GM12878 (cell line): ENCODE measurements at regions of chr2 and their contacts with region 1.

Region 1: GRCh38 chr2:175136334-175137215 is 31.4 kb downstream of the ATF2 start:
- DNase-seq: no peak
- ATAC-seq: peak; percentile 89
- H3K4me3 ChIP-seq: peak overlapping the region; percentile 25
- H3K27ac ChIP-seq: peak overlapping the region; percentile 49; the same call in 1 of the 2 replicates
- H3K4me1 ChIP-seq: peaks cover 17% of the 10 kb centered on the region
- H3K27me3 ChIP-seq: no peaks in the 10 kb centered on the region
- CTCF ChIP-seq: no peak
- EP300 ChIP-seq: no peak
- POLR2A ChIP-seq: no peak
- RAD21 ChIP-seq: no peak

Region 2: GRCh38 chr2:175123254-175123653 is 13.3 kb before region 1 on chr2:
- CTCF ChIA-PET with region 1: interaction called, 5 read pairs
- POLR2A ChIA-PET with region 1: no interaction called
- RAD21 ChIA-PET with region 1: no interaction called
- SMC1A ChIA-PET with region 1: interaction called, 12 read pairs
- in situ Hi-C with region 1: no loop called
- intact Hi-C with region 1: no loop called
- DNase-seq: no peak
- ATAC-seq: no peak
- H3K4me3 ChIP-seq: no peak overlapping the region
- H3K27ac ChIP-seq: no peak overlapping the region
- H3K4me1 ChIP-seq: no peaks in the 10 kb centered on the region
- H3K27me3 ChIP-seq: no peaks in the 10 kb centered on the region
- CTCF ChIP-seq: no peak
- EP300 ChIP-seq: no peak
- POLR2A ChIP-seq: no peak
- RAD21 ChIP-seq: no peak

Region 3: DNA sequence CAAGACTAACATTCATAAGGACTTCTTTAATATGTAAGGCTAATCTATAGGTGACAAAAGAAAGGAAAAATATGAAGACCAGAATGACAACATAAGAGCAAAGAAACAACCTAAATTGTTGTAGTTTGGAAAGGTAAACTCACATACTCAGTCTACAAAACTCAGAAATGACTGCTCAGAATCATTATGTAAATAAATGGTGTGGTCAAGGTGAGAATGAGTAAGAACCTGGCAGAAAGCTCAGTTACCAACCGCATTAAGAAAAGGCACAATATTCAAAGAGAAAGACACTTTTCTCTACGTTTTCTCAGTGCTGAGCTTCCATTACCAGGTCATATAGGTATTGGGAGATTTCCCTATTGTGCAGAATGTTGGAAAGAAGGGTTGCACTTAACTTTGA is 15.7 kb after region 1 on chr2:
- CTCF ChIA-PET with region 1: interaction called, 20 read pairs
- POLR2A ChIA-PET with region 1: interaction called, 7 read pairs
- RAD21 ChIA-PET with region 1: interaction called, 3 read pairs
- SMC1A ChIA-PET with region 1: interaction called, 33 read pairs
- in situ Hi-C with region 1: no loop called
- intact Hi-C with region 1: no loop called
- DNase-seq: no peak
- ATAC-seq: peak; percentile 80
- H3K4me3 ChIP-seq: no peak overlapping the region
- H3K27ac ChIP-seq: no peak overlapping the region
- H3K4me1 ChIP-seq: peaks cover 18% of the 10 kb centered on the region
- H3K27me3 ChIP-seq: no peaks in the 10 kb centered on the region
- CTCF ChIP-seq: no peak
- EP300 ChIP-seq: no peak
- POLR2A ChIP-seq: no peak
- RAD21 ChIP-seq: no peak

Region 4: DNA sequence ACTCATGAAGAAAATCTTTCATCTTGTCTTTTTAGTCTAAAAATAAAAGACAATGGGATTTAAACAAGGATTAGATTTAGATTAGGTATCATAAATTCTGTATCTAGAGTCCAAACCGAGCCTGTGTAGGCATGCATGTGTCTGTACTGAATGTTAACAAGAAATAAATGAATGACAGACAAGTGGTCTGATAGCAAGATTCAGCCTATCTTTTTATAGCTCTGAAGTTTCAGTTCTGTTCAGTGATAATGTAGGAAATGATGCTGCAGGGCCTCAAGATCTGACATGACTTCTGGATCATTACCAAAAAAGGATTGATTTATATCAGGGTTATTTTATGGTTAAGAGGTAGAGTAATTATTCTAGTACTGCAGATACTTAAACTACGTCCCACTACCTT is 182.0 kb after region 1 on chr2:
- CTCF ChIA-PET with region 1: no interaction called
- POLR2A ChIA-PET with region 1: no interaction called
- RAD21 ChIA-PET with region 1: no interaction called
- SMC1A ChIA-PET with region 1: no interaction called
- in situ Hi-C with region 1: no loop called
- intact Hi-C with region 1: no loop called
- DNase-seq: no peak
- ATAC-seq: peak; percentile 64
- H3K4me3 ChIP-seq: no peak overlapping the region
- H3K27ac ChIP-seq: no peak overlapping the region
- H3K4me1 ChIP-seq: no peaks in the 10 kb centered on the region
- H3K27me3 ChIP-seq: no peaks in the 10 kb centered on the region
- CTCF ChIP-seq: no peak
- EP300 ChIP-seq: no peak
- POLR2A ChIP-seq: no peak
- RAD21 ChIP-seq: no peak